ENCODE measurements at regions of chr22 and their contacts with region 1.

Region 1: DNA sequence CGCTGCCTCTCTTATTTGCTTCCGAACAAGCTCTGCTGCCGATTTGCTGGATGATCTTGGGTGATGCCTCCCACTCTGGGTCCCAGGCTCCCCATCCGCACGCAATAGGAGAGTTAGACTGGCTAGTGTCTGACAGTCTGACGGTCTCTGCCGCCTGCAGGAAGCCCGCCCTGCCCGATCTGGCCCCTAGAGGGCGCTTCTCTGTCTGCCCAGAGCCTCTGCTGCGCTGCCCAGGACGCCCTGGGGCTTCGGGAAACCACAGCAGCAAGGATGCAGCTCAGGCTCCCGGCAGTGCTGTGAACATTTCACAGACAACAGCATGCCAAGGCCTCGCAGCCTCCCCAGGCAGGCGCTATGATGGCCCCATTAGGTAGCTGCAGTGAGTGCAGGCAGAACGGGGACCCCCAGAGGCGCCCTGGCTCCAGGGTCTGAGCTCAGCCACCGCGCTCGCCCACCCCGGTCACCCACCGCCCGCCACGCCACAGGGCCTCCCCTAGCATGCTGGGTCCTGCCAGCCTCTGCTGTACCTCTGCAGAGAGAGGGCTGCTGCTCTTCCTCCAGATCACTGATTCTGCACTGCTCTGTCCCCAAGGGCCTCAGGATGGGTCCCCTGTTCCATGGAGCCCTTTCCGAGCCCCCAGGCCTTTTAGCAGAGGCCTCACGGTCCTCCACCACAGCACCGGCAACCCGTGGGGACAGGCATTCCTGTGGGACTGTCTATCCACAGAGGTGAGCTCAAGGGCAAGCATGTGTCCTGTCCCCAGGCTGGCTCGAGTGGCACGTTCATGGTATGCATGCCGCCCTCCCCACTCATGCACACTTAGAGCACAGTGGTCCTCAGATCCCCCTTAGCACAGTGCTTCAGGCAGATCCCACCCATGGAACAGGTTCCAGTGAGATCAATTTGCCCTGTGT is 4.3 kb upstream of the BAIAP2L2 start:
- DNase-seq: peak; percentile 68 to 95 (median 84)
- ATAC-seq: peak; percentile 92
- H3K4me3 ChIP-seq: no peak overlapping the region
- H3K27ac ChIP-seq: no peak overlapping the region
- H3K4me1 ChIP-seq: peaks cover 0 to 6% of the 10 kb centered on the region in 2 donors
- H3K27me3 ChIP-seq: no peaks in the 10 kb centered on the region
- CTCF ChIP-seq: peak; percentile 92 to 99

Region 2: GRCh38 chr22:38353142-38353629 is 238.4 kb after region 1 on chr22:
- intact Hi-C with region 1: loop called in 1 of 2 experiments (anchors 10 kb)
- DNase-seq: peak in 3 of 4 donors; percentile 66 to 96 (median 69)
- ATAC-seq: peak; percentile 96
- H3K4me3 ChIP-seq: no peak overlapping the region
- H3K27ac ChIP-seq: no peak overlapping the region
- H3K4me1 ChIP-seq: peaks cover 0 to 6% of the 10 kb centered on the region in 2 donors
- H3K27me3 ChIP-seq: peaks cover 0 to 9% of the 10 kb centered on the region in 2 donors
- CTCF ChIP-seq: peak; percentile 97 to 99